GM12878 (cell line): ENCODE measurements at regions of chr6 and their contacts with region 1.

Region 1: DNA sequence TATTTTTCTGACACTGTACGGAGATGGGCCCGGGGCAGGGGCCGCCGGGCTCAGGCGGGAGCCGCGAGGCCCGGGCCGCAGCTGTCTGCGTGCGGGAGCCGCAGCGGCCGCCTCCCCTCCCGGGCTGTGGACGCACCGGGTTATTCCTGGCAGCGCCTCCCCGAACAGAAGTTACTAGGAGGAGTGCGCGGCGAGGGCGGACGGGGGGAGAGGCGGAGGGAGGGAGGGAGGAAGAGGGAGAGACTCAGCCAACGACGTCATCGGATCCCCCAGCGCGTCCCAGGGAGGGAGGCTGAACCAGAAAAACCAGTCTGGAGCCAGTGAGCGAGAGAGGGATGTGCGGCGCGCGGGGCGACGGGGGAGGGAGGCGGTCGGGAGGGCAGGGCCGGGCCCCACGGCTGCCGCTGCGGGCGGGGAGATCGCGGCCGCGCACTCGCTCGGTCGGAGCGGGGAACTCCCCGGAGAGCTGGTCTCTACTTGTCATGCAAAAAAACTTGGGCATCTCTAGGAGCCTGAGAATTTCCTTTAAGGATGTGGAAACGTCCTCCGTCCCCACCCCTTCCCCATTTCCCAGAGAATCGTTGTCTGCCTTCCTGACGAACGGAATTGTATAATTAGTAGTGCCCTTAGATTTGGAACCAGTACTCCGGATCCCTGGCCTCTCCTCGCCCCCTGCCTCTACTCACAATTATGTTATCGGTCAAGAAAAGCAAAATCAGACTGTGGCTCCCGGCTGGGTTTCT is 1.4 kb upstream of the HIVEP2 start:
- DNase-seq: no peak
- ATAC-seq: peak; percentile 51
- H3K4me3 ChIP-seq: peak overlapping the region; percentile 94
- H3K27ac ChIP-seq: peak overlapping the region; percentile 98
- H3K4me1 ChIP-seq: peaks cover 9% of the 10 kb centered on the region; the same call in 1 of the 2 replicates
- H3K27me3 ChIP-seq: no peaks in the 10 kb centered on the region
- CTCF ChIP-seq: no peak
- EP300 ChIP-seq: no peak; a peak in 1 of 4 replicates
- POLR2A ChIP-seq: peak; percentile 52; the same call in 1 of the 2 replicates
- RAD21 ChIP-seq: no peak

Region 2: DNA sequence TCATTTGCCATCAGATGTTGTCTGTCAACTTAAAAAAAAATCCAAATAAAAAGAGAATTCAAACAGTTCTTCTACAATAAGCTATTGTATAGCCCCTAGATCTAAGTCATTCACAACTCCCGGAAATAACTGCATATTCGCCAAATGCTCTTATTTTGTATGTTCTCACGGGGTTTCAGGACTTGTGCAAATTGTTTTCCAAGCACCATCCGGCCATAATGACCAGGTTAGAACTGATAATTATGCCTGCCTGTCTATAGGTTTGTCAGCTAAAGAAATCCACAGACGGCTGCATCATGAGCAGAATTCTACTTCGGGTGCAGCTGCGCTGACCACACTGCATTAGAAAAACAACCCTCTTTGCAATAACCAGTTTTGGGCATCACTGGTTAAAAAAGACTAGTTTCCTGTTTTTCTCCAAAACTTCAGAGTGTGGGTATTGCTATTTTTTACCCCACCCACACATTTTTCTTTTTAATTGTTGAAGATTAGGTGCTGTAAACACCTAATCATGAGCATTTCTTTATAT is 89.1 kb before region 1 on chr6:
- CTCF ChIA-PET with region 1: interaction called, 5 read pairs
- POLR2A ChIA-PET with region 1: no interaction called
- RAD21 ChIA-PET with region 1: interaction called, 5 read pairs
- SMC1A ChIA-PET with region 1: interaction called, 5 read pairs
- in situ Hi-C with region 1: no loop called
- intact Hi-C with region 1: loop called (anchors 2 kb)
- DNase-seq: no peak
- ATAC-seq: peak; percentile 58
- H3K4me3 ChIP-seq: peak overlapping the region; percentile 59; the same call in 1 of the 2 replicates
- H3K27ac ChIP-seq: peak overlapping the region; percentile 98
- H3K4me1 ChIP-seq: peaks cover 54% of the 10 kb centered on the region
- H3K27me3 ChIP-seq: no peaks in the 10 kb centered on the region
- CTCF ChIP-seq: no peak
- EP300 ChIP-seq: peak in 1 of 2 experiments; percentile 57; a peak in 1 of 4 replicates
- POLR2A ChIP-seq: 0 out of 2 replicates have a peak, but pooled peaks have one; percentile 3
- RAD21 ChIP-seq: no peak

Region 3: DNA sequence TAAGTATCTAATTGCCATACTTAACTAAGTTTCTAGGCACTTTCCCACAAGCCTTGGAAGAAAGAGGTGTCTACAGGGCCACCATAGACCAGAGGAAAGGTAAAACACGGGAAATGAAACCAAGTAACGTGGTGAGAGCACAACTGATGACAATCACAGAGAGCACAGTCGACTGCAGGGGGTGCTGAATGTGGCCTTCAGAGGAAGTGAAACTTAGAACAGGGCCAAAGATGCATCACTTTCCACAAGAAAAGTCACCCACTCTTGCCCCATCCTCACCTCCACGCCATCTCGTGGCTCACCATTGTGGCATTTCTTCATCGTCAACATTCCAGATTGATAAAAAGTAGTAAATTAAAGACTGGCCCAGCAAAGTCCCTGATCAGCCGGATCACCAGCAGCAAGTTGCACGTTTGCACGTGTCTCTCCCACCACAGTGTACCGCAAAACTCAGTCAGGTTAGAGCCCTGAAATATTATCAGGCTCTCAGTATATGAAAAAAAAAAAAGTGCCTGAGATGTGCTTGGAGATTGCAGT is 32.8 kb before region 1 on chr6:
- CTCF ChIA-PET with region 1: no interaction called
- POLR2A ChIA-PET with region 1: interaction called, 3 read pairs
- RAD21 ChIA-PET with region 1: interaction called, 8 read pairs
- SMC1A ChIA-PET with region 1: interaction called, 4 read pairs
- in situ Hi-C with region 1: no loop called
- intact Hi-C with region 1: loop called (anchors 2 kb)
- DNase-seq: peak; percentile 94
- ATAC-seq: peak; percentile 89
- H3K4me3 ChIP-seq: peak overlapping the region; percentile 27
- H3K27ac ChIP-seq: peak overlapping the region; percentile 95
- H3K4me1 ChIP-seq: peaks cover 32% of the 10 kb centered on the region
- H3K27me3 ChIP-seq: no peaks in the 10 kb centered on the region
- CTCF ChIP-seq: peak; percentile 11 to 27 (median 26); a peak in 3 of 6 replicates
- EP300 ChIP-seq: peak; percentile 72 to 97; a peak in 3 of 4 replicates
- POLR2A ChIP-seq: peak; percentile 43; the same call in 1 of the 2 replicates
- RAD21 ChIP-seq: peak; percentile 53

Region 4: DNA sequence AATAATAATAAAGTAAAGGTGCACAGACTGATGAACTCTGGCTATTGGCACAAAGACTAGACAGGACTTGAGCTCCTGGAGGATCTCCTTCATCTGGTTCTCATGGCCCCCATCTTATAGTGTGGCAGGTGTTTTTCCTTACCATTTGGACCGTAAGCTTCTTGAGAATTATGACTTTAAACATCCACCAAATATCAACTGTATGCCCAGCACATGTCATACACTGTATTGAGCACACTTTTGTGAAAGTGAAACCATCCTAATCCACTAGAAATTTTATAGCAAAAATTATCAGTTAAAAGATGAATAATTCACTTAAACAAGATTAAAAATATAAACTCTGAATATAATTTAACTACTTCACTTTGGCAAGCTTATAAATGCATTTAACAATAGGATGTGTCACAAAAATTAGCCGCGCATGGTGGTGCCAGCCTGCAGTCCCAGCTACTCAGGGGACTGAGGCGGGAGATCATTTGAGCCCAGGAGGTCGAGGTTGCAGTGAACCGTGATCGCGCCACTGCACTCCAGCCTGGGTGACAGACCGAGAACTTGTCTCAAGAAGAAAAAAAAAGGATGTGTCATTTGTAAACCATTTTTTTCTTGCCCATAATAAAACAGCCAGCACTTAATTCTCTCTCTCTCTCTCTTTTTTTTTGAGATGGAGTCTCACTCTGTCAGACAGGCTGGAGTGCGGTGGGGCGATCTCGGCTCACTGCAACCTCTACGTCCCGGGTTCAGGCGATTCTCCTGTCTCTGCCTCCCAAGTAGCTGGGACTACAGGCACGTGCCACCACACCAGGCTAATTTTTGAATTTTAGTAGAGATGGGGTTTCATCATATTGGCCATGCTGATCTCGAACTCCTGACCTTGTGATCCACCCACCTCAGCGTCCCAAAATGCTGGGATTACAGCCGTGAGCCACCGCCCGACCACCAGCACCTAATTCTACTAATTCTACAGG is 10.5 kb before region 1 on chr6:
- CTCF ChIA-PET with region 1: interaction called, 21 read pairs
- POLR2A ChIA-PET with region 1: interaction called, 5 read pairs
- RAD21 ChIA-PET with region 1: interaction called, 10 read pairs
- SMC1A ChIA-PET with region 1: interaction called, 32 read pairs
- in situ Hi-C with region 1: no loop called
- intact Hi-C with region 1: no loop called
- DNase-seq: no peak
- ATAC-seq: peak; percentile 67
- H3K4me3 ChIP-seq: peak overlapping the region; percentile 34; the same call in 1 of the 2 replicates
- H3K27ac ChIP-seq: peak overlapping the region; percentile 66
- H3K4me1 ChIP-seq: peaks cover 31% of the 10 kb centered on the region
- H3K27me3 ChIP-seq: no peaks in the 10 kb centered on the region
- CTCF ChIP-seq: no peak
- EP300 ChIP-seq: no peak
- POLR2A ChIP-seq: no peak
- RAD21 ChIP-seq: no peak

Region 5: DNA sequence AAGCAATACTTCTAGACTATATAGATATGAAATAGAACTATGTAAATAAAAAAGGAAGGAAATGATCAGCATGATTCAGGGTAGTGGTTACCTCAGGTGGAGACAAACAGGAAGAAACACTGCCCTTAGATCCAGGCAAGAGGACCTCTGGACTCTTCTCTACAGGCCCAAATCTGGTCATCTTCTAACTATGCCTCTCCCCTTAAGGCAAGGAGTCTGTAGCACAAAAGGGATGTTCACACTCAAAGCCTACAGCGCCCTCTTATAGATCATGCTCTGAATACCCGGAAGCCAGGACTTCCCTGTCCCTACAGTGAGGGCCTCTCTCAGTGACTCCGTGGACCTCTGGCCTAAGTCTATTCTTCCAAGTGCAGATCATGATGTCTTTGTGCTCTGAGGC is 29.0 kb after region 1 on chr6:
- CTCF ChIA-PET with region 1: no interaction called
- POLR2A ChIA-PET with region 1: no interaction called
- RAD21 ChIA-PET with region 1: no interaction called
- SMC1A ChIA-PET with region 1: no interaction called
- in situ Hi-C with region 1: no loop called
- intact Hi-C with region 1: no loop called
- DNase-seq: no peak
- ATAC-seq: no peak
- H3K4me3 ChIP-seq: no peak overlapping the region
- H3K27ac ChIP-seq: no peak overlapping the region
- H3K4me1 ChIP-seq: no peaks in the 10 kb centered on the region
- H3K27me3 ChIP-seq: no peaks in the 10 kb centered on the region
- CTCF ChIP-seq: 0 out of 6 replicates have a peak, but pooled peaks of 1 of the 3 experiments have one; percentile 2
- EP300 ChIP-seq: no peak
- POLR2A ChIP-seq: no peak
- RAD21 ChIP-seq: no peak

Region 6: GRCh38 chr6:142987490-142987889 is 41.1 kb after region 1 on chr6:
- CTCF ChIA-PET with region 1: no interaction called
- POLR2A ChIA-PET with region 1: no interaction called
- RAD21 ChIA-PET with region 1: no interaction called
- SMC1A ChIA-PET with region 1: no interaction called
- in situ Hi-C with region 1: no loop called
- intact Hi-C with region 1: no loop called
- DNase-seq: no peak
- ATAC-seq: no peak
- H3K4me3 ChIP-seq: no peak overlapping the region
- H3K27ac ChIP-seq: no peak overlapping the region
- H3K4me1 ChIP-seq: no peaks in the 10 kb centered on the region
- H3K27me3 ChIP-seq: no peaks in the 10 kb centered on the region
- CTCF ChIP-seq: no peak
- EP300 ChIP-seq: no peak
- POLR2A ChIP-seq: no peak
- RAD21 ChIP-seq: no peak

Region 7: GRCh38 chr6:143034689-143035334 is 88.5 kb after region 1 on chr6:
- CTCF ChIA-PET with region 1: no interaction called
- POLR2A ChIA-PET with region 1: no interaction called
- RAD21 ChIA-PET with region 1: no interaction called
- SMC1A ChIA-PET with region 1: no interaction called
- in situ Hi-C with region 1: no loop called
- intact Hi-C with region 1: loop called (anchors 5 kb)
- DNase-seq: no peak
- ATAC-seq: peak; percentile 87
- H3K4me3 ChIP-seq: no peak overlapping the region
- H3K27ac ChIP-seq: no peak overlapping the region
- H3K4me1 ChIP-seq: peaks cover 14% of the 10 kb centered on the region
- H3K27me3 ChIP-seq: peaks cover 0 to 2% of the 10 kb centered on the region in 2 experiments; a peak in 1 of 4 replicates
- CTCF ChIP-seq: no peak
- EP300 ChIP-seq: no peak
- POLR2A ChIP-seq: no peak
- RAD21 ChIP-seq: no peak

Region 8: GRCh38 chr6:143337201-143337949 is 391.0 kb after region 1 on chr6:
- CTCF ChIA-PET with region 1: no interaction called
- POLR2A ChIA-PET with region 1: no interaction called
- RAD21 ChIA-PET with region 1: no interaction called
- SMC1A ChIA-PET with region 1: no interaction called
- in situ Hi-C with region 1: no loop called
- intact Hi-C with region 1: loop called (anchors 2 kb)
- DNase-seq: no peak
- ATAC-seq: peak; percentile 98
- H3K4me3 ChIP-seq: no peak overlapping the region
- H3K27ac ChIP-seq: no peak overlapping the region
- H3K4me1 ChIP-seq: no peaks in the 10 kb centered on the region
- H3K27me3 ChIP-seq: no peaks in the 10 kb centered on the region
- CTCF ChIP-seq: peak; percentile 60 to 83 (median 66)
- EP300 ChIP-seq: no peak
- POLR2A ChIP-seq: no peak
- RAD21 ChIP-seq: peak; percentile 33